Prostate gland (tissue), 2 donors: ENCODE measurements at regions of chr1 and their contacts with region 1.

Region 1: GRCh38 chr1:27300341-27301051 is 21.5 kb upstream of the TMEM222 start:
- DNase-seq: peak; percentile 79
- H3K4me3 ChIP-seq: no peak overlapping the region
- H3K27ac ChIP-seq: peak overlapping the region; percentile 77 to 84
- H3K4me1 ChIP-seq: peaks cover 4% of the 10 kb centered on the region
- H3K27me3 ChIP-seq: no peaks in the 10 kb centered on the region
- CTCF ChIP-seq: peak; percentile 95 to 99 (median 98)
- POLR2A ChIP-seq: no peak

Region 2: GRCh38 chr1:27234049-27234882 is 66.2 kb before region 1 on chr1 and contains the start of gene WDTC1:
- intact Hi-C with region 1: no loop called
- DNase-seq: peak; percentile 97
- H3K4me3 ChIP-seq: peak within 1 kb of the TSS; percentile 94 to 99
- H3K27ac ChIP-seq: peak within 1 kb of the TSS; percentile 82 to 90
- H3K4me1 ChIP-seq: no peaks in the 10 kb centered on the region
- H3K27me3 ChIP-seq: no peaks in the 10 kb centered on the region
- CTCF ChIP-seq: peak in 2 of 4 experiments; percentile 7 to 29
- POLR2A ChIP-seq: peak; percentile 85
- total RNA-seq, gene WDTC1: 45.1 to 56.1 TPM

Region 3: DNA sequence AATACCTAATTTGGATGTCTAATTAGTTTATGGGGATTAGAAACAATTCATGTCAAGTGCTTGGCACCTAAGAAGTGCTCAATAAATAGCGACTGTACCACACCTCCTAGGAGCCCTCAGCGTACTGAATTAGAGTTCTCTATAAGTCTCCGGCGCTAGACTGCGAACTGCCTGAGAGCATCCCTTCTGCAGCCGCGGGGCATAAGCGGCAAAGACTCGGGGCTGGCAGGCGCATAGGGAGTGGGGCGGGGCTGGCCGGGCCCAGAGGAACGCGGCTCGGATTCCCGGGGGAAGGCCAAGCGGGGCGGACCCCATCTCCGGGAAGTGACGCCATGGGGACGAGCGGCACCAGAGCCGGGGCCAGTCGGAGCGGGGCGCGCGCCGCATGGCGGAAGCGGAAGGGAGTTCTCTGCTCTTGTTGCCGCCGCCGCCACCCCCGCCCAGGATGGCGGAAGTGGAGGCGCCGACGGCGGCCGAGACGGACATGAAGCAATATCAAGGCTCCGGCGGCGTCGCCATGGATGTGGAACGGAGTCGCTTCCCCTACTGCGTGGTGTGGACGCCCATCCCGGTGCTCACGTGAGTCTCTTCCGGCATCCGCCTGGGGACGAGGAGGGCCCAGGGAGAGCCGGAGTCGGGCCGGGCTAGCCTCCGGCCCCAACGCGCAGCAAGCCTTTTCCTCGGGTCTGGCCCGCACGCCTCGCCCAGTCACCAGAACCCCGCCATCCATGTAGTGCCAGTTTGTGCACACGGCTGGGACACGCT is 21.5 kb after region 1 on chr1 and contains the start of gene TMEM222:
- intact Hi-C with region 1: loop called (anchors 2 kb)
- DNase-seq: peak; percentile 97
- H3K4me3 ChIP-seq: peak within 1 kb of the TSS; percentile 53 to 62
- H3K27ac ChIP-seq: peak within 1 kb of the TSS; percentile 71 to 75
- H3K4me1 ChIP-seq: peaks cover 14% of the 10 kb centered on the region
- H3K27me3 ChIP-seq: no peaks in the 10 kb centered on the region
- CTCF ChIP-seq: peak in 2 of 4 experiments; percentile 60 to 64
- POLR2A ChIP-seq: peak; percentile 48
- total RNA-seq, gene TMEM222: 49.6 to 59.5 TPM

Region 4: DNA sequence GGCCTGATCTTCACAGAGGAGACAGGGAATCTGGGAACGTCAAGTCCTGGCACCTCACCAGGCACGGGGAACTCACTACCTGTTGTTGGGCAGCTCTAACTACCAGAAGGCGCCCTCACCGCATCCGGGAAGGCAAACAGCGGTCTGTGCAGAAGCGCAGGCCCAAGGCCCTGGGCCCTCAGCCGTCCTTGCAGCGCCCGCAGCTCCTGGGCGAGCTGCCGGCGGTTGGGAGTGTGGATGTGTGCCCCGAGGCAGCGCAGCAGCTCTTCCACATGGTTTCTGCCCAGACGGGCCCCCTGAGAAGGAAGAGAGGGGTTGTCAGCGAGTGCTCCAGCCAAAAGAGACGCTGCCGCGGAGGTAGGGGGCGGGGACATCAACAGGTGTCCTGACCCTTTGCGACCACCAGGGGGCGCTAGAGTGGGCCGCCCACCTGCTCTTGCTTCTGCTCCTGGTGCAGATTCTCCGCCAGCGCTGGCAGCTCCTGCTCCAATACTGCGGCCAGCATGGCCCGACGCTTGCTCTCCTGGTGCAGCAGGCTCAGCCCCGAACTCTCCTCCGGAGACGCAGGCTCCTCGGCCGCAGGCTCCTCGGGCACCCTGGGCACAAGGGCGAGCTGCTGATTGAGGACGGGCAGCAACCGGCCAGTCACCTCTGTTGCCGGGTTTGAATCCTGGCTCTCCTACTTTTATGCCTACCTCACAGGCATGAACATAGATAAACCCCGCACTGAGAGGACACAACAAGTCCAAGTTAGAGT is 57.0 kb after region 1 on chr1:
- intact Hi-C with region 1: loop called (anchors 10 kb)
- DNase-seq: peak; percentile 77
- H3K4me3 ChIP-seq: peak overlapping the region in 1 of 2 donors; percentile 20
- H3K27ac ChIP-seq: peak overlapping the region; percentile 82 to 83
- H3K4me1 ChIP-seq: no peaks in the 10 kb centered on the region
- H3K27me3 ChIP-seq: no peaks in the 10 kb centered on the region
- CTCF ChIP-seq: peak; percentile 97 to 99 (median 98)
- POLR2A ChIP-seq: no peak